ENCODE measurements at regions of chr11 and their contacts with region 1.

Region 1: GRCh38 chr11:102287964-102288724 is 29.1 kb upstream of the BIRC3 start:
- DNase-seq: peak; percentile 82
- ATAC-seq: peak; percentile 85
- H3K4me3 ChIP-seq: no peak overlapping the region
- H3K27ac ChIP-seq: no peak overlapping the region
- H3K4me1 ChIP-seq: peaks cover 5% of the 10 kb centered on the region
- H3K27me3 ChIP-seq: no peaks in the 10 kb centered on the region
- CTCF ChIP-seq: peak; percentile 81
- POLR2A ChIP-seq: no peak
- RAD21 ChIP-seq: peak; percentile 79

Region 2: DNA sequence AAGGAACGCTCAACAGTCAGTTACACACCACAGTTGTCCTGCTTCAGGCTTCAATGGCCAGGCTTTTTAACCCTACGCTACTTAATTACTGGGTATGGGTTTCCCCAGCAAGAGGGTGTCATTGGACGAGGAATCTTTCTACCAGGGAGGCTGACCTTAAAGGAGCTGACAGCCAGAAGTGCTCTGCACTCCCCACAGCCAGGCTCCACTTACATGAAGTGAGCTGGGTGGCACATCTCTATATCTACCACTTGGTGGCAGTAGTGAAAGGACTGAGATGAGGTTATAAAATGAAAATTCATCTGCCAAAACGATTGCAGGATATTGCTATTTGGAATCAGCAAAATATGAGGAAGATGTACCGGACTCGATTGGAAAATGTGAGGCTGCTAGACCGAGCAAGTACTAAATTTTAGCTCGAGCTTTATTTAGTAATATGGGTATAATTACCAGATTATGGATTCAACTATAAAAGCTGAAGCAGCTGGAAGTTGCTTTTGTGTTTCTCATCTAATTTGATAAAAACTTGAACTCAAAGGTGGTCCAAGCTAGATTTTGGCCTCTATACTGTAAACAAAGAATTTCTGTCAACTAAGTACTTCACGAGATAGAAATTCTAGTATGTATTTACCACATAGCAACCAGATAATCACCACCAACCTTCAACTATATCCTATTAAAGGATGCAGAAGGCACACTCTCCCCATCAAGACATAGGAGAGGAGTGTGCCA is 427.3 kb before region 1 on chr11:
- CTCF ChIA-PET with region 1: interaction called, 3 read pairs
- POLR2A ChIA-PET with region 1: no interaction called
- dilution Hi-C with region 1: no loop called
- in situ Hi-C with region 1: no loop called
- intact Hi-C with region 1: loop called (anchors 10 kb)
- DNase-seq: peak; percentile 76
- ATAC-seq: peak; percentile 85
- H3K4me3 ChIP-seq: no peak overlapping the region
- H3K27ac ChIP-seq: no peak overlapping the region
- H3K4me1 ChIP-seq: peaks cover 3% of the 10 kb centered on the region; the same call in 1 of the 2 replicates
- H3K27me3 ChIP-seq: no peaks in the 10 kb centered on the region
- CTCF ChIP-seq: peak; percentile 81
- POLR2A ChIP-seq: no peak
- RAD21 ChIP-seq: peak; percentile 81

Region 3: GRCh38 chr11:102346748-102347461 is 58.8 kb after region 1 on chr11 and contains the start of gene BIRC2:
- CTCF ChIA-PET with region 1: interaction called, 3 read pairs
- POLR2A ChIA-PET with region 1: no interaction called
- dilution Hi-C with region 1: no loop called
- in situ Hi-C with region 1: no loop called
- intact Hi-C with region 1: loop called (anchors 1 kb)
- DNase-seq: peak; percentile 89
- ATAC-seq: peak; percentile 91
- H3K4me3 ChIP-seq: peak within 1 kb of the TSS; percentile 81
- H3K27ac ChIP-seq: peak within 1 kb of the TSS; percentile 95
- H3K4me1 ChIP-seq: no peaks in the 10 kb centered on the region; the same call in 1 of the 2 replicates
- H3K27me3 ChIP-seq: no peaks in the 10 kb centered on the region
- CTCF ChIP-seq: peak; percentile 94
- POLR2A ChIP-seq: peak; percentile 84
- RAD21 ChIP-seq: peak; percentile 36
- total RNA-seq, gene BIRC2: 112 and 204 TPM in 2 replicates

Region 4: DNA sequence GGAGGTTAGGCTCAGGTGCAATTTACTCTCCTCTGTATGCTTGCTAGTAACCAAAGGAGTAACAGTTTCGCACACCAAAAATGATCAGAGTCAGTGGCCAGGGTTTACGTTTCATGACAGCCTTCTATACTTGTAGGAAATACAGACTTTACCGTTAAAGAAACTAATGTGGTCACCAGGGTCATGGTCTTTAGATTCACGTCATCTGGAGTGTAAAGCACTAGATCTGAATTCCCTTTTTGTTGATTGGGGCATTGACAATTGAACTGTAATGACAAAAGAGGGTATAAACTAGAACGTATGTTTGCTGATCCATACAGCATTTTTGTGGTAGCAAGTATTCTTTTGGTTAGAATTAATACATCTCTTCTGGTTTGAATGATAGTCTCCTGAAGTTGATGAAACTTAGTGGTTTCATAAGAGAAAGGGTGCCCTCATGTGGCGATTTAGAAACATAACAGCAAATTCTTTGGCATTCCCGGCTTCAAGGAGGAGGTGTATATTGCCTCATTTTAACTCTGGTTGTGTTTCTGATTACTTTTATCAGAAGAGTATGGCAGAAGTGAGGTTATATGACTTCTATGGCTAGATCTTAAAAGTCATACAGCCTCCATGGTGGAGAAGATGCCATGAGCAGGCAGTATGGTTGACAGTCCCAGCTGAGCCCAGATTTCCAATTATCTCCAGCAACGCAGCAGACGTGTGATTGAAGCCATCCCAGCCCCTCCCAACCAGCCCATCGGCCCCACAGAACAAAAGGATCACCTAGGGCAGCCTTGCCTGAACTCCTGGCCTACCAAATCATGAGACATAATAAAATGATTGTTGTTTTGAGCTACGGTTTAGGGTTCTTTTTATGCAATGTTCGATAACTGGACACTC is 207.3 kb after region 1 on chr11:
- CTCF ChIA-PET with region 1: no interaction called
- POLR2A ChIA-PET with region 1: no interaction called
- dilution Hi-C with region 1: no loop called
- in situ Hi-C with region 1: loop called (anchors 5 kb)
- intact Hi-C with region 1: loop called (anchors 2 kb)
- DNase-seq: peak; percentile 88
- ATAC-seq: peak; percentile 91
- H3K4me3 ChIP-seq: no peak overlapping the region
- H3K27ac ChIP-seq: no peak overlapping the region
- H3K4me1 ChIP-seq: peaks cover 3% of the 10 kb centered on the region; the same call in 1 of the 2 replicates
- H3K27me3 ChIP-seq: no peaks in the 10 kb centered on the region
- CTCF ChIP-seq: peak; percentile 81
- POLR2A ChIP-seq: no peak
- RAD21 ChIP-seq: peak; percentile 88

Region 5: GRCh38 chr11:102613455-102613854 is 325.3 kb after region 1 on chr11:
- CTCF ChIA-PET with region 1: interaction called, 3 read pairs
- POLR2A ChIA-PET with region 1: no interaction called
- dilution Hi-C with region 1: no loop called
- in situ Hi-C with region 1: no loop called
- intact Hi-C with region 1: loop called (anchors 2 kb)
- DNase-seq: no peak
- ATAC-seq: no peak
- H3K4me3 ChIP-seq: no peak overlapping the region
- H3K27ac ChIP-seq: no peak overlapping the region
- H3K4me1 ChIP-seq: no peaks in the 10 kb centered on the region; the same call in 1 of the 2 replicates
- H3K27me3 ChIP-seq: no peaks in the 10 kb centered on the region
- CTCF ChIP-seq: no peak
- POLR2A ChIP-seq: no peak
- RAD21 ChIP-seq: no peak